Dorsolateral prefrontal cortex (tissue), 120 donors: ENCODE measurements at regions of chr4 and their contacts with region 1.

Region 1: GRCh38 chr4:147096667-147097604 is 151.3 kb upstream of the TTC29 start:
- DNase-seq: no peak
- H3K4me3 ChIP-seq: peak overlapping the region in 1 of 59 donors; percentile 12
- H3K27ac ChIP-seq: no peak overlapping the region
- H3K27me3 ChIP-seq: peaks cover 0 to 5% (median 0%) of the 10 kb centered on the region in 45 donors
- CTCF ChIP-seq: peak; percentile 69 to 92 (median 82)

Region 2: GRCh38 chr4:146342600-146343192 is 754.2 kb before region 1 on chr4:
- intact Hi-C with region 1: loop called in 1 of 2 experiments (anchors 10 kb)
- DNase-seq: no peak
- H3K4me3 ChIP-seq: no peak overlapping the region
- H3K27ac ChIP-seq: no peak overlapping the region
- H3K27me3 ChIP-seq: no peaks in the 10 kb centered on the region
- CTCF ChIP-seq: peak; percentile 49 to 85 (median 67)

Region 3: GRCh38 chr4:146842876-146843275 is 254.1 kb before region 1 on chr4:
- intact Hi-C with region 1: no loop called
- DNase-seq: no peak
- H3K4me3 ChIP-seq: no peak overlapping the region
- H3K27ac ChIP-seq: no peak overlapping the region
- H3K27me3 ChIP-seq: no peaks in the 10 kb centered on the region
- CTCF ChIP-seq: no peak

Region 4: DNA sequence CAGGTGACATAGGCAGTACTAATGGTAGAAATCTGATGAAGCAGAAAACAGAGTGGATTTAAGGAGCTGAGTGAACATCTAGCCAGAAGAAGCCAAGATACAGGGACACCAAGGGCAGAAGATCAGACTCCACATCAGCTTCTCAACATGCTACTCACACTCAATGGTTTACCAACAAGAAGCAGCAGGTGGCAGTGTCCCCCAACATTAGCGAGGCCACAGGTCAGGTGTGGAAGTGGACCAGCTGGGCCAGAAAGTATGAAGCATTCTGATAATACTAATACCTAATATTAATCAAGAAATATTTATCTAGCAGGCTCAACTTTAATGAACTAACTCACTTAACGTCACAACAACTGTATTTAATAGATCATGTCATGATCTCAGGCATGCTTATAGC is 77.9 kb before region 1 on chr4:
- intact Hi-C with region 1: loop called (anchors 1 to 2 kb)
- DNase-seq: peak in 7 of 10 donors; percentile 11 to 85 (median 65)
- H3K4me3 ChIP-seq: no peak overlapping the region
- H3K27ac ChIP-seq: no peak overlapping the region
- H3K27me3 ChIP-seq: no peaks in the 10 kb centered on the region
- CTCF ChIP-seq: peak; percentile 19 to 92 (median 72)

Region 5: DNA sequence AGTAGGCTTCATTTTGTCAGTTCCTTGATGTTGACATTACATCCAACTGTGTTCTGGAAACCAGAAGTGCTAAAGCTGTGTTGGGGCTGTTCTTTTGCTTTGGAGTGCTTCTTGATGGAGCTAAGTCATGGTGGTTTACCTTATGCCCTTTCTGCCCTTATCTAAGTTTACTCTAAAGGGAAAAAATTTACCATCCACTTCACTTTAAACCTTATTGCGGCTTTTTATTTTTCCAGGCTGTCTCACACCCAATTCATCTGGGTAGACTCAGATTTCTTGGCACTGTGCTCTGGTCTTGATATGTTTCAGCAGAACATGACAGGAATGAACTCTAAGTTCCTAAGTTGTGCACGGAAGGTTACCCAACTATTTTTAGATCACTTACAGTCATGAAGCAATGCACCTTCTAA is 46.6 kb before region 1 on chr4:
- intact Hi-C with region 1: no loop called
- DNase-seq: no peak
- H3K4me3 ChIP-seq: no peak overlapping the region
- H3K27ac ChIP-seq: no peak overlapping the region
- H3K27me3 ChIP-seq: peaks cover 0 to 4% (median 0%) of the 10 kb centered on the region in 45 donors
- CTCF ChIP-seq: no peak